SK-N-SH (cell line): ENCODE measurements at regions of chr3 and their contacts with region 1.

Region 1: GRCh38 chr3:16177962-16178627 is 3.6 kb downstream of the GALNT15 start:
- DNase-seq: peak; percentile 88
- H3K4me3 ChIP-seq: peak overlapping the region in 1 of 2 experiments; percentile 51; a peak in 2 of 4 replicates
- H3K27ac ChIP-seq: peak overlapping the region in 1 of 2 experiments; percentile 71; a peak in 2 of 4 replicates
- H3K4me1 ChIP-seq: peaks cover 14 to 15% of the 10 kb centered on the region in 2 experiments
- H3K27me3 ChIP-seq: no peaks in the 10 kb centered on the region
- CTCF ChIP-seq: peak; percentile 96
- EP300 ChIP-seq: peak in 1 of 2 experiments; percentile 27; a peak in 1 of 4 replicates
- RAD21 ChIP-seq: peak; percentile 93

Region 2: DNA sequence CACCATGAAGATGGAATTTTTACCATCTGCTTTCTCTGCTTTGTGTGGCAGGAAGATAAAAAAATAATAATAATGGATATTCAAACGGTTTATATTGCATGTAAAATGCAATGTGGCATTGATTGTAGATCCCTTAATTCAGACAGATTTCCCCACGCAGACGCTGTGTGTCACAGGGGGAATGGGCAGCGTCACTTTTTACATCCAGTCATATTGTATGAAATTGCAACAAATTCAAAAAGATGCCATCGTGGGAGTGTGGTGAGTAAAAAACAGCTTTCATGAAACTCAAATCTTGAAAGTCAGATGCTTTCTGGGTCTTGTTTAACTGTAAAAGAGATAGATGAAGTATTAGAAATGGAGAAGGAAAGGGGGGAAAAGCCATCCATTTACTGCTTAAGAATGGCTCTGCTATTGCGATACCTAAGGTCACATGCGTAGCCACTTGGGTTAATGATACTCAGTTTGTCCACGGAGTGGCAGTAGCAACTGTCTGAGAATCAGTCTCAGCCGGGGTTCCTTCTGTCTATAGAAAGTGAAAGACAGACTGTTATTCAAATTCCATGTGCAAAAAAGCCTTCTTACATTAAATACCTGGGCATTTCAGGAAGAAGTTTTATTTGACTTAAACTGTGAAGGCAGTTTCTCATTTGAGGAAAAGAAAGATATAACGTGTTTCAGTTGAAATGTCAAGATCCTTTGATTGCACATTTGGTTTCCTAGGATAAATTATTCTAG is 548.1 kb before region 1 on chr3:
- CTCF ChIA-PET with region 1: interaction called, 11 read pairs
- POLR2A ChIA-PET with region 1: no interaction called
- DNase-seq: peak; percentile 76
- H3K4me3 ChIP-seq: no peak overlapping the region; a peak in 2 of 4 replicates
- H3K27ac ChIP-seq: peak overlapping the region; percentile 79 to 94; a peak in 3 of 4 replicates
- H3K4me1 ChIP-seq: peaks cover 26 to 27% of the 10 kb centered on the region in 2 experiments
- H3K27me3 ChIP-seq: no peaks in the 10 kb centered on the region
- CTCF ChIP-seq: peak; percentile 87
- EP300 ChIP-seq: no peak
- RAD21 ChIP-seq: peak; percentile 93

Region 3: DNA sequence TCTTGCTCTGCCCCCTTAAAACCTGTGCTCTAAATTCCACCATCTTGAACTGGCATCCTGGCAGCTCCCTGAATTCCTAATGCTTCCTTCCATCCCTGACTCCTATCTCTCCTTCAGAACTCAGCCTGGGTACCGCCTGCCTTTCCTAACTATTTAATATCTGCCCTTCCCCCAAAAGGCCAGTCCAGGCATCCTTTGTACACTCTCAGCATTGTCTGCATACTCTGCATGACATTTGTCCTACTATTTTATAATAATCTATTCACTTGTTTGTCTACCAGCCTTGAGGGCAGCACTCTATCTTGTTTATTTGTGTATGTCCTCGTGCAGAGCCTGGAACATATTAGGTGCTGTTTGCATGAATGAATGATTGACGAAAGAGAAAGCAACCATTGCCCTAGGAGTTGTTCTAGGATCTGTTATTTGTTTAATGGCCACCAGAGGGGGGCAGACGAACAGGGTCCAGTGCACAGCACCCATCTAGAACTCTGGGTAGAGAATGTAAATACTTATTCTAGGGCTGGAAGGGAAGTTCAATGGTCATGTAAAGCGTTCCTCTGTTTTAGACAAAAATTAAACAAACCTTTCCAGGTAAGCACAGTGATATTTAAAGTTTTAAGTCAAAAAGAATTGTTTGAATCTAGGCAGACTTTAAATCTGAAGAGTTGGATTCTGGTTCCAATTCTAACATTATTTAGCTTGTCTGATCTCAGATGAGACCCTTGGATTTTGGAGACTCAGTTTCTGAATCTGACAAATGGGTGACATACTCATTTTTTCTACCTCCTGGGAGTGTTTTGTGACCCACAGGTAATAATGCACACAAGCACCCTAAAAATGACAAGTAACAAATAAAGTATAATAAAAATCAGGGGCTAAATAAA is 129.4 kb before region 1 on chr3:
- CTCF ChIA-PET with region 1: interaction called, 160 read pairs
- POLR2A ChIA-PET with region 1: no interaction called
- DNase-seq: peak; percentile 83
- H3K4me3 ChIP-seq: peak overlapping the region; percentile 23 to 26; a peak in 2 of 4 replicates
- H3K27ac ChIP-seq: no peak overlapping the region
- H3K4me1 ChIP-seq: no peaks in the 10 kb centered on the region; a peak in 2 of 4 replicates
- H3K27me3 ChIP-seq: no peaks in the 10 kb centered on the region
- CTCF ChIP-seq: peak; percentile 87
- EP300 ChIP-seq: no peak
- RAD21 ChIP-seq: peak; percentile 97

Region 4: DNA sequence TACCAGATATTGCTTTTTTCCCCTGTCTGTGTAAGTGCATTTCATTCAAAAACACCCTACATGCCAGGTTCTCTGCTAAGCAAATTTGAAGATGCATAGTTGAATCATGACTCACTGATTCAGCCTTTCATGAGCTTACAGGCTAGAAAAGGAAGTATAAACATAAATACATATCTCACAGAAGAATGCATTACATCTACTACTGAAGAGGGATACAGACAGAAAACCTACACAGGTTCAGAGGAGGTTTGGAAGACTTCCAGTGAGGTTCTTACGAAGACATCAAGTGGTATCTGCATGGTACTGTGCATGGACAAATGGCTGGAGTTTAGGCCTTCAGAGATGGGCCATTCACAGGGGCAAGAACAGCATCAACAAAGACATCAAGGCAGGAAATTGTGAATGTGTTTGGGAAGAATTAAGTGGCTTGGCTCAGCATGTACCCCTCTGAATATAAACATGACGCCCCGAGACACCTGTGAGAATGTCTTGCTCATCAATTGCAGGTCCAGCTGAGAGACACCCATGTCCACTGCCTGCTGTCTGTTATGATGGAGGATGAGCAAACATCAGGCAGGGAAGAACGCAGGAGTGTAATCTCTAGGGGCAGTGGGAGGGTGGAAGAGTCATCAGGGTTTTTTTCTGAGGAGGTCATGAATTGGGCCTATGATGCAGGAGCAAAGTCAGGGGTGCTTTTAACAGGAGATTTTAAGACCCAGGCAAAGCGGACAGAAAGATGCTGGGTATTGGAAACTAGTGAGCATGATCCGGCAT is 108.8 kb before region 1 on chr3:
- CTCF ChIA-PET with region 1: interaction called, 10 read pairs
- POLR2A ChIA-PET with region 1: no interaction called
- DNase-seq: no peak
- H3K4me3 ChIP-seq: no peak overlapping the region
- H3K27ac ChIP-seq: peak overlapping the region; percentile 65 to 96; a peak in 3 of 4 replicates
- H3K4me1 ChIP-seq: peaks cover 10 to 72% of the 10 kb centered on the region in 2 experiments
- H3K27me3 ChIP-seq: no peaks in the 10 kb centered on the region
- CTCF ChIP-seq: no peak
- EP300 ChIP-seq: peak in 1 of 2 experiments; percentile 79; a peak in 2 of 4 replicates
- RAD21 ChIP-seq: no peak

Region 5: DNA sequence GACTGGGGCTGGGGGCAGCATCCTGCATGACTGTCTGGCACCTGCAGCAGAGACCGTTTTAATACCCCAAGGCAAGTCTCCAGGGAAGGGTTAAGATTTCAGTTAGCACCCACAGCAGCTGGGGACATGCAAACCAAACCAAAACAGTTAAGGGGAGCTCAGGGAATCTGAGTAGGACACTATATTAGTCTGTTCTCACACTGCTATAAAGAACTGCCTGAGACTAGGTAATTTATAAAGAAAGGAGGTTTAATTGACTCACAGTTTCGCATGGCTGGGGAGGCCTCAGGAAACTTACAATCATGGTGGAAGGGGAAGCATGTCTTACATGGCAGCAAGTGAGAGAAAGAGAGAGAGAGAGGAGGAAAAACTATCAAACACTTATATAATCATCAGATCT is 21.7 kb after region 1 on chr3:
- CTCF ChIA-PET with region 1: interaction called, 22 read pairs
- POLR2A ChIA-PET with region 1: no interaction called
- DNase-seq: no peak
- H3K4me3 ChIP-seq: no peak overlapping the region
- H3K27ac ChIP-seq: no peak overlapping the region
- H3K4me1 ChIP-seq: no peaks in the 10 kb centered on the region
- H3K27me3 ChIP-seq: no peaks in the 10 kb centered on the region
- CTCF ChIP-seq: no peak
- EP300 ChIP-seq: no peak
- RAD21 ChIP-seq: no peak

Region 6: DNA sequence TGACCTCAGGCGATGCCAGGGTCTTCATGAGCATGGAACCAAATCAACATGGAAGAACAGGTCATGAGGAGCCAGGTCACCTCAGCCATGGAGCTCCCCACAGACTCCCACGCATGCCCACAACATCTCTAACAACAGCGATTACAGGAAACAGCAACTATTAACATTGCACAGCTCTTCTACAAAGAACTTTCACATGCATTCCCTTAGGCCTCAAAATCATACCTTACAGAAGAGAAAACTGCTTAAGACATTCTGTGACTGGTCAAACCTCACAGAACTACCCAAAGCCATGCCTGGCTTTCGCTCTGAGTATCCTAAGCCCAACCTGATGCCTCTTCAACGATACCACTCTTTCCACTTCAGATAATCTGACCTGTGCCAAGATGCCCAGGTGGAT is 204.8 kb after region 1 on chr3:
- CTCF ChIA-PET with region 1: no interaction called
- POLR2A ChIA-PET with region 1: no interaction called
- DNase-seq: no peak
- H3K4me3 ChIP-seq: no peak overlapping the region
- H3K27ac ChIP-seq: no peak overlapping the region
- H3K4me1 ChIP-seq: peaks cover 0 to 7% of the 10 kb centered on the region in 2 experiments; a peak in 1 of 4 replicates
- H3K27me3 ChIP-seq: no peaks in the 10 kb centered on the region
- CTCF ChIP-seq: no peak
- EP300 ChIP-seq: no peak
- RAD21 ChIP-seq: no peak